Posterior vena cava (tissue), 2 donors: ENCODE measurements at regions of chr1 and their contacts with region 1.

Region 1: GRCh38 chr1:158180741-158181576 is at the start of gene CD1D:
- DNase-seq: peak; percentile 85
- total RNA-seq, gene CD1D: 1.4 to 2.4 TPM

Region 2: DNA sequence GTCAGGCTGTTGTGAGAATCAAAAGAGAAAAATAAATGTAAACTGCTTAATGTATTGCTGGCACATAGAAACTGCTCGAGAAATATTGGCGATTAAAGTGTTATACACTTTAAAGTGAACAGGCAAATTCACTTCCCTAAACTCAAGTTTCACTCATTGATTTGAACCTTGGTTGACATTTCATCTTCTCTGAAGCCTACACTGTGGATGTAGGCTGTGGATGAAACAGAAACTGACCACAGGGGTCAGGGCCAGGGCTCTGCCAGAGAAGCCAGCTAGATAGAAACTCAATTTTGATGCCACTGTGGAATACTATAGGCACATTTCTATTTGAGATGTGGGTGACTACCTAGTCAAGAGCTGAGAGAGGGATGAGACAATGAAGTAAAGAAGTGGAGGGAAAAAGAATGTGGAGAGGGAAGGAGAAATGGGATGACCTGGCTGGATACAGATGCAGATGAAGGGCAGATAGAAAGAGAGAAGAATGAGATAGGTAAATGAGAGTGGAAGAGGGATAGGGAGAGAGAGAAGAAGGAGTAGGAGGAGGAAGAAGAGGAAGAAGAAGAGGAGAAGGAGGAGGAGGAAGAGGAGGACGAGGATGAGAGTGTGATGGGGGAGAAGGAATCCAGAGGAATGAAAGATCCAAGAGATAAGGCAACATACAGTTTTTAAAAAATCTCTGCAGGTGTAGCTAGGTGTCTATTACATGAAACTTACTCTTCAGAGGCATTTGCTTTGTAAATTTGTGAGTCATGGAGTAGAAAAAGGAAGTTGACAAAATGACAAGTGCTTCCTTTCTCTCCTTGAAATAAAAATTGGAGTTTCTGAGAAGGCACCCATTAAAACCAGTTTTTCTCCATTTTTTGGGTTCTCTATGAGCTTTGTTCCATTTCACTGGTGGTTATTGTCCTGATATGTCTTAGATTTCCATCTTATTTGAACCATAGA is 17.7 kb before region 1 on chr1:
- intact Hi-C with region 1: no loop called
- DNase-seq: no peak

Region 3: DNA sequence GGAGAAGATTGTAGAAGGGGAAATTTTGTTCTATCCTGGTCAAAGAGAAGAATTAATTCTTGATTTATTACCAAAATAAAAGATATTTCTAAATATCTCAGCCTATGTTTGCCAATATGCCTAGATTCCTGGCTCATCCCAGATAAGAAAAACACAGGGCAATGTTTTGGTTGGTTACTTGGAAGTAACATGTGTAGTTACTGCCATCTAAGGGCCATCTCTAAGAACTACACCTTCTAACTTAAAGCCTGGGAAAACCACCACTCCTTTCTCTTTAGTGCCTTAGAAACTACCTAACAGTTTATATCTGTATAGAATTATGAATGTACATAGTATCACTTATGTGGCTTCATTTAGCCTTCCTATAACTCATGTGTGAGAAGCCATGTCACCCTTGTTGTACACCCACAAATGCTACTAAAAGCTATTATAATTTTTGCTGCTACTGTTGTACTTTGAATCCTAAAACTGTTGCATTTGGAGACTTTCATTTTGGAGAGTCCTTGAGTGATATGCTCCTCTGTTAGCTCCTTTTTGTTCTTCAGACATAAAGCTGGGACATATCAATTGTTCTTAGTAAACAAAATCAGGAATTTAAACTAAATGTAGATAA is 891.1 kb after region 1 on chr1:
- intact Hi-C with region 1: loop called in 1 of 2 experiments (anchors 5 kb)
- DNase-seq: no peak